Activated T-helper 2 cell treated with anti-CD3 and anti-CD28 coated beads, Interferon-gamma antibody, Interleukin-2, Interleukin-4, amounts not matched to agents 10 μg/mL and 5 μg/mL and 100 μg/mL, durations not matched to agents 14 hours and 24 hours and 36 hours (primary cell): ENCODE measurements at regions of chr2 and their contacts with region 1.

Region 1: DNA sequence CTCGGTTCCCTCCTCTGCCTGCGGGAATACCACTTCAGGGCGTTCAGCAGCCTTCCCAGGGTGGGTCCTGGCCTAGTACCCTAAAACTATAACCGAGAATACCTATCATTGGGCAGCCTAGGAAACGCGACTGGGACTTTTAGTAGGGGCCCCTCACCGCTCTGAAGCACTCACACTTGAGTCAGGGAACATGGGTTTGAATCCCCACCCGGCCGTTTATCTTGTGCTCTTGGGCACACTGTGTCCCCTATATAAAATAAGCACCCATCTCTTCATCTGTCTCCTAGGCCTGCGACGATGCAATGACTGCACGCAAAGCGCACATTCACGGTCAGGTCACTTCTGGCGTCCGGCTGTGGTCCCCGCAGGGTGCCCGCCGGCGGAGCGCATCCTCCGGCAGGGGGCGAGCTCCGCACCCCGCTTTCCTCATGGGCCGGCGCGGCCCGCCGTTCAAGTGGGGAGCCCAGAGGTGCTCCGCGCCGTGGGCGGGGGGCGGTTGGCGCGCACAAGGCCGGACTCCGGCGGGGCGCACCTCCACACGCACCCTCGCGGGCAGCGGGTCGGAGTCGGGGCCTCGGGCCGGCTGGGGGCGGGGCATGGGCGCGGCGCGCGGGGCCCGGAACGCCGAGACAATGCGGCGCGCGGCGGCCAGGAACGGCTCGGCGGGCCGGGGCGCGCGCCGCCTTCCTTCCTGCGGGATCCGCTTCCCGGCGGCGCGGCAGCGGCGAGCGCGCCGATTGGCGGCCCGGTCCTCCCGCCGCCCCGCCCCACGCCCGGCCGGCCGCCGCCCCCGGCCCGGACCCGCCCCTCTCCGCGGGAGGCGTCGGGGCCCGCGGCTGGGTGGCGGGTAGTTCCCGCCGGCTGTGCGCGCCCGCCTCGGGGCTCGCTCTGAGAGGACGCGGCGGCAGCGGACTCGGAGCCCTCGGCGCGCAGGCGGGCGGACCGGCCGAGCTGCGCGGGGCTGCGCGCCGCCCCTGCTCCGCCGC is at the start of gene ASAP2:
- DNase-seq: peak; percentile 40
- H3K4me3 Mint-ChIP-seq: peak within 1 kb of the TSS; percentile 72
- H3K27ac Mint-ChIP-seq: no peak within 1 kb of the TSS
- H3K4me1 Mint-ChIP-seq: peaks cover 3% of the 10 kb centered on the region
- H3K27me3 Mint-ChIP-seq: peaks cover 54% of the 10 kb centered on the region
- total RNA-seq, gene ASAP2: 0.74 and 0.96 TPM in 2 replicates

Region 2: DNA sequence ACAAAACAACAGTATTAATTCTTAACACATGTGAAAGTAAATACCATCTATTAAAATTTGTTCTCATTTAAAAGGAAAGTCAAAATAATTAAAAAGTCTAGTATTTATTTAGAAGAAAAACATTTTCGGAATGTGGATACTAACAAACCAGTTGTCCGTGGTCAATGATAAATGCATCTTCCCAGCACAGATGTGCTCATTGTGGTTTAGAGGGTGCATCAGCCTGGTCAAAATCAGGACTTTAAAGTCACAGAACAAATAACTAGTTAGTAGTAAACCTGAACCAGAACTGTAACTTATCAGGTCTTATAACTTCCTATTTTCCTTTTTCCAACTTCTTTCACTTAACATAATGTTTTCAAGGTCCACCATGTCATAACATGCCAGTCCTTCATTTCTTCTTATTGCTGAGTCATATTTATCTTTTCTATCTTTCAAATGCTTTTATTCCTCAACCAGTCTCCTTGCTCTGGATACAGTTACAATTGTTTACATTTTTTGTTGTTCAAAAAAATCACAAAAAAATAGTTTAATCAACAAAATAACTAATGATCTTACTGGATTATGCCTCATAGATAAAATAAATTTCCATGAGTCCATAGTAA is 468.6 kb before region 1 on chr2:
- intact Hi-C with region 1: no loop called
- DNase-seq: no peak
- H3K4me3 Mint-ChIP-seq: no peak overlapping the region
- H3K27ac Mint-ChIP-seq: no peak overlapping the region
- H3K4me1 Mint-ChIP-seq: no peaks in the 10 kb centered on the region
- H3K27me3 Mint-ChIP-seq: no peaks in the 10 kb centered on the region

Region 3: DNA sequence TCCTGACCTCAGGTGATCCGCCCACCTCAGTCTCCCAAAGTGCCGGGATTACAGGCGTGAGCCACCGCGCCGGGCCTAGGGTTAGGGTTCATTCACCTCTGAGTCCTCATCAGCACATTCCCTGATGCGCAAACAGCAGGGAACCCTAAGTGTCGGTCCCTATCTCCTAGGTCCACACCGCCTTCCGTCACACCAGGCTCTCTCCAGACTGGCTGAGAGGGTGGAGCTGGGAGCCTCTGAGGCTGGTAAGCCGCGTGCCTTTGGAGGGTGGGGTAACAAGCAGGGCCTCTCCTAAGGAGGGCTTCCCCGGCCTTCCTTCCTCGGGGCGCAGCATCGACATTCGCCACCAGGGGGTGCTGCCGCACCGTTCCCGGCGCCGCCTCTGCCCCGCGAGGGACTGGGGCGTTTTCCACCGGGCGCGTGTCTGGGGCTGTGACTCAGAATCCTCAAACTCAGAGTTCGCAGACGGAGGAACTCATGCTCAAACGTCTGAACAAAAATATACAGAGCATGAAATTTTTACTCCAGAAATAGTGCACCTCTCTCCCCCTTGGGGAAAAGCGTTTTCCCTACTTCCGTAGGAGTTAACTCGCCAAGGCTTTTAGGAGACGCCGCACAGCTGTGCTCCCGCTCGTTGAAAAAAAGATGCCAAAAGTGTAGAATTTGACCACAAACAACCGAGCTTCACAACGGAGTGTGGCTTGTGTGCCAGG is 63.5 kb before region 1 on chr2:
- intact Hi-C with region 1: loop called (anchors 1 kb)
- DNase-seq: peak; percentile 68
- H3K4me3 Mint-ChIP-seq: peak overlapping the region; percentile 4
- H3K27ac Mint-ChIP-seq: no peak overlapping the region
- H3K4me1 Mint-ChIP-seq: peaks cover 1% of the 10 kb centered on the region
- H3K27me3 Mint-ChIP-seq: peaks cover 19% of the 10 kb centered on the region

Region 4: DNA sequence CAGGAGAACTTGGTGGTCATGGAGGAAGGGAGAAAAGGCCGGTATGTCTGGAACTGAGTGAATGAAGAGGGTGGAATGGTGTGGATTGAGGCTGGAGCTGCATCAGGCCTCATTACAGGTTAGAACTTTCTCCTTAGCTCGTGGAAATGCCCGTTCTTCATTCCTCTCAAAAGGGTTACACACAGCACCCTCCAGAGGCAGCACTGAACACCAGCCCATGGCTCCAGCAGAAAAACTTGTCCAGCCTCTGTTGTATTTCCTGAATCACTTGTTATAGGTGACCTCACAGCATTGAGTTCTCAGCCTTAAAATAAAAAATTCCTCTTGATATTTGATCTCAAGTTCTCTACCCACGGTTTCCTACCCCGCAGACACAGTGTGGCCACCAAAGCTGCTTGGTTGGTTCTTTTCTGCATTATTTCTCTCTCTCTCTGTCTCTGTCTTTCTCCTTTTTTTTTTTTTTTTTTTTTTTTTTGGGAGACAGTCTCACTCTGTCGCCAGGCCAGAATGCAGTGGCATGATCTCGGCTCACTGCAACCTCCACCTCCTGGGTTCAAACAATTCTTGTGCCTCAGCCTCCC is 127.4 kb after region 1 on chr2:
- intact Hi-C with region 1: loop called (anchors 2 kb)
- DNase-seq: no peak
- H3K4me3 Mint-ChIP-seq: no peak overlapping the region
- H3K27ac Mint-ChIP-seq: no peak overlapping the region
- H3K4me1 Mint-ChIP-seq: peaks cover 3% of the 10 kb centered on the region
- H3K27me3 Mint-ChIP-seq: peaks cover 20% of the 10 kb centered on the region